HEK293 (cell line): ENCODE measurements at regions of chr10 and their contacts with region 1.

Region 1: GRCh38 chr10:128069351-128070051 is 56.7 kb downstream of the MKI67 start:
- H3K4me3 ChIP-seq: no peak overlapping the region
- H3K27ac ChIP-seq: no peak overlapping the region
- H3K4me1 ChIP-seq: no peaks in the 10 kb centered on the region
- CTCF ChIP-seq: peak; percentile 62

Region 2: GRCh38 chr10:127679642-127680255 is 389.8 kb before region 1 on chr10:
- CTCF ChIA-PET with region 1: interaction called, 10 read pairs
- POLR2A ChIA-PET with region 1: no interaction called
- H3K4me3 ChIP-seq: no peak overlapping the region
- H3K27ac ChIP-seq: no peak overlapping the region
- H3K4me1 ChIP-seq: no peaks in the 10 kb centered on the region; the same call in 1 of the 2 replicates
- CTCF ChIP-seq: no peak

Region 3: GRCh38 chr10:127715782-127716378 is 353.6 kb before region 1 on chr10:
- CTCF ChIA-PET with region 1: interaction called, 24 read pairs
- POLR2A ChIA-PET with region 1: no interaction called
- H3K4me3 ChIP-seq: no peak overlapping the region
- H3K27ac ChIP-seq: no peak overlapping the region
- H3K4me1 ChIP-seq: no peaks in the 10 kb centered on the region
- CTCF ChIP-seq: no peak

Region 4: GRCh38 chr10:127853868-127854768 is 215.4 kb before region 1 on chr10:
- CTCF ChIA-PET with region 1: interaction called, 10 read pairs
- POLR2A ChIA-PET with region 1: no interaction called
- H3K4me3 ChIP-seq: no peak overlapping the region
- H3K27ac ChIP-seq: no peak overlapping the region
- H3K4me1 ChIP-seq: no peaks in the 10 kb centered on the region
- CTCF ChIP-seq: peak; percentile 80

Region 5: DNA sequence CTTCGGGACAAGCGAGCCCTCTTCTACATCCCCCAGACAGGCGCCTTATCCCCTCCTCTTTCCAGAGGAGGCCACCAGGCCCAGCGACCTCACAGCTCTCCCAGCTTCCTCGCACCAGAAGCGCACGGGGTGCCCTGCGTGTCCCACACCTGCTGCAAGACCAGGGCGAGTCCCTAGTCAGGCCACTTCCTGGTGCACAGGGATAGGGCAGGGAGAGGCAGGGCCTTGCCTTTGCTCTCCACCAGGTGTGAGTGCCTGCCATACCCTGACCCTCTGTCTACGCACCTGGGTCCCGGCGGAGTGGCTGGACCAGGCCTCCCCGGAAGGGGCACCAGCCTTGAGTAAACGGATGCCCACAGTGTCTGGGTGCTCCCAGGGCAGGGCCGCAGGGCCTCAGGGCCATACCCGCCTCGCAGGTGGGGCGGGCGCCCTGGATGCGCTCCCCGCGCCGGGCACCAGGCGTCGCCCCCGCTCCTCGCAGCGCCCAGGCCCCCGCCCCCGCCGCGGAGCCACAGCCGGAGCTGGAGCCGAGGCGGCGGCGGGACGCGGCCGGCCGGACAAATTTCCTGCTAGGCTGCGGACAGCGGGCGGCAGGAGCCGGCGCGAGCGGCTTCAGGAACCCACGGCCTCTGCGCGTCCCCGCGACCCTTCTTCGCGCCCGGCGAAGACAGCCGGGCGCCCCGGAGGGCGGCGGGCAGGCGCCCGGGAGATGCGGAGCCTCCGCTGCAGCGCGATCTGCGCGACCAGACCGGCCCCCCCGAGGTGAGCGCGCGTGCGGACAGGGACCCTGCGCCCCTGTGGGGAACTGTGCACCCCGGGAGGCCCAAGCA is 162.7 kb before region 1 on chr10 and contains the start of gene PTPRE:
- CTCF ChIA-PET with region 1: interaction called, 37 read pairs
- POLR2A ChIA-PET with region 1: no interaction called
- H3K4me3 ChIP-seq: peak within 1 kb of the TSS; percentile 49
- H3K27ac ChIP-seq: no peak within 1 kb of the TSS; the same call in 1 of the 2 replicates
- H3K4me1 ChIP-seq: no peaks in the 10 kb centered on the region
- CTCF ChIP-seq: peak; percentile 61

Region 6: GRCh38 chr10:128035557-128035973 is 33.9 kb before region 1 on chr10:
- CTCF ChIA-PET with region 1: interaction called, 57 read pairs
- POLR2A ChIA-PET with region 1: interaction called, 3 read pairs
- H3K4me3 ChIP-seq: no peak overlapping the region
- H3K27ac ChIP-seq: no peak overlapping the region
- H3K4me1 ChIP-seq: no peaks in the 10 kb centered on the region
- CTCF ChIP-seq: peak; percentile 32